KBM-7 (cell line): ENCODE measurements at regions of chr7 and their contacts with region 1.

Region 1: DNA sequence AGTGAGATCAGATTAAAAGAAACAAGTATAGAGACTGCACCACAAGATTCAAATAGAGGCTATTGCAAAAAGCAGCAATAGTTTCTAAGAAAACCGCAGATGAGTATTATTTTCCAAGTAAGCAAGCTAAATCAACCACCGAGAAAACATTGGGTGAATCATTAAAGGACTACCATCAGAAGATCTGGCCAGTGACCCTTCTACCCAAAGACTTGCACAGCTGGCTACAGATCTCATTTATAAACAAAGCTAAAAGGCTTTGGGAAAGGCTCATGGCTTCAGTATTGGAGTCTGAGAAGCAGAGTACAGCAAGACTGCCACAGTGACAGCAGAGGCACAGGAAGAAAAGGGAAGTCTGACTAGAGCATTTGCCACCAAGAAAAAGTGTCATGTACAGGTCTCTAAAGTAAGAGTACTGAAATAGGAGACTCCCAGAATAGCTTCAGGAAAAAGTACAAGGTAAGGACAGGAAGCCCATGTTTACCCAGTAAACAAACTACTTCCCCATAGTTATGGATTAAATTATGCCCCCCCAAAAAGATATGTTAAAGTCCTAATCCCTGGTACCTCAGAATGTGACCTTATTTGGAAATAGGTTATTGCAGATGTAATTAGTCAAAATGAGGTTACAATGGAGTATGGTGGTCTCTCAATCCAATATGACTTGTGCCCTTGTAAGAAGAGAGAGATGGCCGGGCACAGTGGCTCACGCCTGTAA is 19.0 kb downstream of the STEAP1 start:
- DNase-seq: no peak

Region 2: DNA sequence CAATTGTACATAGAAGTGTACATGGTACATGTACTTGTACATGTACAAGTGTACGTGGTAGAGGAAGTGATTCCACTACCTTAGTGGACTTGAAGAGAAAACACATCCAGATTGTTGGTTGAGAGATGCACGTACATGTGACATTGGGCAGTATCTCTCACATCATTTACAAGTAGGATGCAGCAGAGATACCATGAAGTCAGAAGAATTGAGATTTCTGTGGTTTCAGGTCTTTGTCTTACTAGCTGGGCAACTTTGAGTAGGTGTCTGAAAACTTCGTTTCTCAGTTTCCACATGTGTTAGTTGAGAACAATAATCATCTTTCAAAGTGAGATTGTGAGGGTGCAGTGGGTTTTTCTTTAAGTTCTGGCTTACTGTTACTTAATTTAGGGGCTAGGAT is 251.4 kb after region 1 on chr7:
- in situ Hi-C with region 1: loop called (anchors 25 kb)
- DNase-seq: no peak